ENCODE measurements at regions of chr11 and their contacts with region 1.

Region 1: DNA sequence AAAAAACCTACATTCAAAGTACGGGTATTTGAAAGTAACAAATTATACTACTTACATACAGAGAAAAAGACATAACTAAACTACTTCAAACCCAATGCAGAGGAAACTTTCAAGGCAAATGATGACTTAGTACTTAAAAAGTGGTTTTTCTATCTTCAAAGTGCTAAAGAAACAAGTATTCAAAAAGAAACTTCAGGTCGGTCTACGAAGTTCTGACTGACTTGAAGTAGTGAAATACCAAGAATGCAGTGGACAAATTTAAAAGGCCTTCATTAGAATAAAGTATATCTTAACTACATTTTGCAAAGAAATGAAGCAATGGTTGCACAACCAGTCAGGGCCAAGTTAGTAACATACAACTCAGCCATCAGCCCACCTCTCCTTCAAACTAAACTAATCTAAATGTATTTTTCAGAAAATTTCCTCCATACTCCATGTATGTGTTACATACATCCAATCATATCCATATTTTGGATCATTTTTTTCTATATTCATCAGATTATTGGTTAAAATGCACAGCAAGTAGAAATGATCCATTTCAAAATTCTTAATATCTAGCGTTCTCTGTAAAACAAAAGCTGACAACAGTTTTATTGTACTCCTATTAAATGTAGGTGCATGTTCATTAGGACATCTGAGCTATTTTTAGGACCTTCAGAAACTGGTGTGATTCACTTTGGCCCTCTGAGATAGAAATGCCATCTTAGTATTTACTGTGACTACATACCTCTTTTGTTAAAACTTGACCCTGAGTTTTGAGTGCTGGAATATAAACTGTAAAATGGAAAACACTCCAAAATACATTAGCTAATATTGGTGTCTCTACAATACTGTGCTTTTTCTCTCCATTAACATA is 49.9 kb downstream of the BIRC2 start:
- DNase-seq: no peak
- H3K4me3 Mint-ChIP-seq: no peak overlapping the region
- H3K27ac Mint-ChIP-seq: peak overlapping the region; percentile 63
- H3K4me1 Mint-ChIP-seq: peaks cover 48% of the 10 kb centered on the region
- H3K27me3 Mint-ChIP-seq: no peaks in the 10 kb centered on the region

Region 2: DNA sequence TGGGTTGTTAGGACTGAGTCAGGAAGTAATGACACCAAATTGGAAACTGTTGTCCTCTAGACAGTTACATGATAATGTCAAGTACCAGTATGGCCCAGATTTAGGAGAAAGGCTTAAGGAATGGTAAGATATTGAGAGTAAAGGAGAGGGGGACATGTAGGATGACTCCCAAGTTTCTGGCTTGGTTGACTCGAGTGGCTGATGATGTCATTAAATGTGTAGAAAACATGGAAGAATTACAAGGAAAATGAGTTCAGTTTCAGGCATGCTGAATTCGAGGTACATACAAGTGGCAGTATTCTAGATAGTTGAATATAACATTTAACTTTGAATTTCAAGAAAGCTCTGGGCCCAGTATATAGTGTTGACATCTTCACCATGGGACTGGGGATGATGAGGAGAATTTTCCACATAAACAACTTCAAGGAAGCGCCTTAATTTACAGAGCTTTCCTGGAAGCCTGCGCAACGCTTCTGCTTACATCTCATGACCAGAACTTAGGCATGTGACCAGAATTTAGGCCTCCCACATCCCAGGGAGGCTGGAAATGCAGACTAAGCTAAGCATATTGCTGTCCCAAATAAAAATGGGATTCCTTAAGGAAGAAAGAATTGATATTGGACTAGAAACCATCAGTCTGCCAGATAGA is 345.9 kb before region 1 on chr11:
- CTCF ChIA-PET with region 1: no interaction called
- intact Hi-C with region 1: no loop called
- DNase-seq: no peak
- H3K4me3 Mint-ChIP-seq: no peak overlapping the region
- H3K27ac Mint-ChIP-seq: no peak overlapping the region
- H3K4me1 Mint-ChIP-seq: peaks cover 8% of the 10 kb centered on the region
- H3K27me3 Mint-ChIP-seq: peaks cover 26% of the 10 kb centered on the region

Region 3: GRCh38 chr11:102115557-102115956 is 281.4 kb before region 1 on chr11:
- CTCF ChIA-PET with region 1: no interaction called
- intact Hi-C with region 1: no loop called
- DNase-seq: no peak
- H3K4me3 Mint-ChIP-seq: no peak overlapping the region
- H3K27ac Mint-ChIP-seq: no peak overlapping the region
- H3K4me1 Mint-ChIP-seq: peaks cover 7% of the 10 kb centered on the region
- H3K27me3 Mint-ChIP-seq: peaks cover 41% of the 10 kb centered on the region

Region 4: GRCh38 chr11:102225689-102226568 is 171.0 kb before region 1 on chr11:
- CTCF ChIA-PET with region 1: no interaction called
- intact Hi-C with region 1: no loop called
- DNase-seq: no peak
- H3K4me3 Mint-ChIP-seq: no peak overlapping the region
- H3K27ac Mint-ChIP-seq: no peak overlapping the region
- H3K4me1 Mint-ChIP-seq: no peaks in the 10 kb centered on the region
- H3K27me3 Mint-ChIP-seq: no peaks in the 10 kb centered on the region

Region 5: DNA sequence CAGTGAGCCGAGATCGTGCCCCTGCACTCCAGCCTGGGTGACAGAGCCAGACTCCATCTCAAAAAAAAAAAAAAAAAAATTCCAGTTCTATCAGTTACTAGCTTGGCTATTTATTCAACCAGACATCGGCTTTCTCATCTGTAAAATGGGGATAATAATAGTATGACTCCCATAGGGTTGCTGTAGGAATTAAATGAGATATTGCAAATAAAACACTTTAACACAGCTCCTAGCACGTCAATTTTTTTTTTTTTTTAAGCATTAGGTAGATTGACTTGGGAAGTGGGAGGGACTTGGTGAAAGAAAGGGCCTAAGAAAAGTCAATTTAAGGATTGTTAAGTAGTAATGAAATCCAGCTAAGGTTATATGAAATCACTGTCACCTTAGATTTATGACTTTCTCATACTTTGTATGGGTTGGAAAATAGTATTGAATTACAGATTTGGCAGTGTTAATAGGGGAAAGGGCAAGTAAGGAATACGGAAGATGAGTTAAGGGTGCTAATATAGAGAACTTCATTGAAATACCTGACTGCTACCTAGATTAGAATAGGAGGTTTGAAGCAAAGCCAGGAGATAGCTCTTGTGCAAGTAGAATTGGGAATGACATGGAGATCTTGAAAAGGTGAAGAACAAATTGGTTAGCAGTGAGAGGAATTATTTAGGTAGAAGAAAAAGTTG is 21.1 kb before region 1 on chr11:
- CTCF ChIA-PET with region 1: interaction called, 34 read pairs
- intact Hi-C with region 1: loop called (anchors 2 kb)
- DNase-seq: no peak
- H3K4me3 Mint-ChIP-seq: no peak overlapping the region
- H3K27ac Mint-ChIP-seq: no peak overlapping the region
- H3K4me1 Mint-ChIP-seq: peaks cover 28% of the 10 kb centered on the region
- H3K27me3 Mint-ChIP-seq: no peaks in the 10 kb centered on the region

Region 6: DNA sequence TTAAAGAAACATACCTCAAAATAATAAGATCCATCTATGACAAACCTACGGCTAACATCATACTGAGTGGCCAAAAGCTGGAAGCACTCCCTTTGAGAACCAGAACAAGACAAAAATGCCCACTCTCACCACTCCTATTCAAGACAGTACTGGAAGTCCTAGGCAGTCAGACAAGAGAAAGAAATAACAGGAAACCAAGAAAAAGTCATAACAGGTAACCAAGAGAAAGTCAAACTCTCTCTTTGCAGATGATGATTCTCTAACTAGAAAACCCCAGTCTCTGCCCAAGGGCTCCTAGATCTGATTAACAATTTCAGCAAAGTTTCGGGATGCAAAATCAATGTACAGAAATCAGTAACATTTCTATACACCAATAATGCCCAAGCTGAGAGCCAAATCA is 20.0 kb after region 1 on chr11:
- CTCF ChIA-PET with region 1: interaction called, 7 read pairs
- intact Hi-C with region 1: loop called (anchors 1 kb)
- DNase-seq: peak; percentile 38
- H3K4me3 Mint-ChIP-seq: peak overlapping the region; percentile 34
- H3K27ac Mint-ChIP-seq: peak overlapping the region; percentile 84
- H3K4me1 Mint-ChIP-seq: peaks cover 92% of the 10 kb centered on the region
- H3K27me3 Mint-ChIP-seq: no peaks in the 10 kb centered on the region

Region 7: DNA sequence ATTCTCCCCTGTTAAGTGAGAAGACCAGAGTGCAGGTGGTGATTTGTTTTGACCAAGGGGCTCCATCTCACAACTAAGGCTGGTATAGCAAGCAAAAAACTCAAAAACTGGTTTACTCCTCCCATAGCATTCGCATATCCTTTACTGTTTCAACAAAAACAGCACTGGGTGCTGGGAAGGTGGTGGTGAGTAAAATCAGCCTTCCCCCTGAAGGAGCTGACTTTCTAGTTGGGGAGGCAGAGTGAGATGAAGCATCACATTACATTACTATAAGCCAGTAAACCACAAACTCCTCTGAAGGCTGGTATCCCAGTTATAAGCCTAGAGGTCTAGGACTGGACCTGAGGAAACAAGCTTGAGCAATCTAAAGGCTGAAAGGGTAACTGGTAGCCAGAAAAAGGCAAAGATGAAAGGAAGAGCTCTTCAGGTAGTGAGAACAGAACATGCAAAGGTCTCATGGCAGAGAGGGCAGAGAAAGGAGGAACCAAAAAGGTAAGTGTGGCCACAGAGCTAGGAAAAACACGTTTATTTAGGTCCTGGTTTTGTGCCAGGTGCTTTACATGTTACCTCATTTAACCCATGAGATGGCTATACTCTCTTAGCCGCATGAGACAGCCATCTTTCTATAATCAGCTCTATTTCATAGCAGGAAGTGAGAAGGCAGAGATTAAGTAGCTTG is 33.4 kb after region 1 on chr11:
- CTCF ChIA-PET with region 1: interaction called, 13 read pairs
- intact Hi-C with region 1: loop called (anchors 1 kb)
- DNase-seq: peak; percentile 86
- H3K4me3 Mint-ChIP-seq: peak overlapping the region; percentile 44
- H3K27ac Mint-ChIP-seq: peak overlapping the region; percentile 95
- H3K4me1 Mint-ChIP-seq: peaks cover 75% of the 10 kb centered on the region
- H3K27me3 Mint-ChIP-seq: no peaks in the 10 kb centered on the region

Region 8: DNA sequence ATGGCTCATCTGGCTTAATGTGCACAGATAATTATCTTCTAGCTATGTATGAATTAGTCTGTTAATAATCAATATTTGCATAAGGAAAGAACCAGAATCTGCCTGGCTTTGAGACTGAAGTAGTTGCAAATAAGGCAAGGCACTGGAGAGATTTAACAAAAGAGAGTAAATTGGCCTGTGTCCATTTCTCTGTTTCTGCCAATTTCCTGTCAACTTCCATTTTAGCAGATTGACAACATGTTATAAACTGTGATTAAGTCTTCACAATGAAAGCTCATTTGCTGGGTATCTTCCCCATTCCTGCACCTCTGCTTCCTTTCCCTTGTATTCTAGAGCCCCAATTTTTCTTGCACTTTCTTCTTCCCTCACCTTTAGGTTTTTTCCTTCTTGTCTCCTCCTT is 60.9 kb after region 1 on chr11:
- CTCF ChIA-PET with region 1: interaction called, 5 read pairs
- intact Hi-C with region 1: loop called (anchors 1 kb)
- DNase-seq: no peak
- H3K4me3 Mint-ChIP-seq: peak overlapping the region; percentile 17
- H3K27ac Mint-ChIP-seq: peak overlapping the region; percentile 64
- H3K4me1 Mint-ChIP-seq: peaks cover 74% of the 10 kb centered on the region
- H3K27me3 Mint-ChIP-seq: no peaks in the 10 kb centered on the region